PC-9 (cell line): ENCODE measurements at regions of chr1 and their contacts with region 1.

Region 1: DNA sequence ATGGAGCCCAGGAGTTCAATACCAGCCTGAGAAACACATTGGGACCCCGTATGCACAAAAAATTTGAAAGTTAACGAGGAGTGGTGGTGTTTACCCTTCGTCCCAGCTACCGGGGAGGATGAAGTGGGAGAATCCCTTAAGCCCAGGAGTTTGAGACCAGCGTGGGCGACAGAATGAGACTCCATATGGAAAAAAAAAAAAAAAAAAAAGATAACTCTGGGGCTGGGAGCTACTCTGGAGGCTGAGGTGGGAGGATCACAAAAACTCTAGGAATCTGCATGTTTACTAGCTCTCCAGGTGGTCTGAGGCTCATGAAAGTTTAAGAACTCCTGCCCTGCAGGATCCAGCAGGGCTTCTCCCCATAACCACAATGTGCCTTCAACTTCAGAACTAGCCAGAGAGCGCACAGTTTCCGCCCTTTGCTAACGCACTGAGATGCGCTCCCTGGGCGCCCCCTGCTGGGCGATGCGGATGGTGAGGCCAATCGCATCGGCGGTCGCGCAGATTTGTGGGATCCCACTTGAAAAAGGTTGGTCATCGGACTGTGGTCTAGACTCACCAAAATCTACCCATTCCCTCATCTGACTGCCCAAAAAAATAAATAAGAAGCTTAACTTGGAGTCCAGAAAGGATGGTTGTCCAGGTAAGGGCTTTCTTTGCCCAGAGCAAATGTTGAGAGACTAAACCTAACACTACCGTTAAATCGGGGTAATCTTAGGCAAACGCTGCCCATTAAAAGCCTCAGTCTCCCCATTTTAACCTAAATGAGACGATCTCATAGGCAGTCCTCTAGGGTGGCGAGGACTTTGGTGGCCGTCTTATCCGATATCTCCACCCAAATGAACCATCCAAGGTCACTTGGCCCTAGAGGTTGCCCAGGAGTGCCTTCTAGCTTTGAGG is 8.8 kb downstream of the ZNF683 start:
- DNase-seq: peak in 1 of 2 experiments; percentile 76
- H3K4me3 ChIP-seq: no peak overlapping the region
- H3K27ac ChIP-seq: no peak overlapping the region
- H3K4me1 ChIP-seq: peaks cover 7% of the 10 kb centered on the region
- H3K27me3 ChIP-seq: no peaks in the 10 kb centered on the region
- CTCF ChIP-seq: peak; percentile 80

Region 2: GRCh38 chr1:25520446-25521061 is 843.2 kb before region 1 on chr1:
- CTCF ChIA-PET with region 1: interaction called, 10 read pairs
- POLR2A ChIA-PET with region 1: no interaction called
- intact Hi-C with region 1: no loop called
- DNase-seq: peak in 1 of 2 experiments; percentile 34
- H3K4me3 ChIP-seq: no peak overlapping the region
- H3K27ac ChIP-seq: no peak overlapping the region
- H3K4me1 ChIP-seq: no peaks in the 10 kb centered on the region
- H3K27me3 ChIP-seq: no peaks in the 10 kb centered on the region
- CTCF ChIP-seq: peak; percentile 79

Region 3: DNA sequence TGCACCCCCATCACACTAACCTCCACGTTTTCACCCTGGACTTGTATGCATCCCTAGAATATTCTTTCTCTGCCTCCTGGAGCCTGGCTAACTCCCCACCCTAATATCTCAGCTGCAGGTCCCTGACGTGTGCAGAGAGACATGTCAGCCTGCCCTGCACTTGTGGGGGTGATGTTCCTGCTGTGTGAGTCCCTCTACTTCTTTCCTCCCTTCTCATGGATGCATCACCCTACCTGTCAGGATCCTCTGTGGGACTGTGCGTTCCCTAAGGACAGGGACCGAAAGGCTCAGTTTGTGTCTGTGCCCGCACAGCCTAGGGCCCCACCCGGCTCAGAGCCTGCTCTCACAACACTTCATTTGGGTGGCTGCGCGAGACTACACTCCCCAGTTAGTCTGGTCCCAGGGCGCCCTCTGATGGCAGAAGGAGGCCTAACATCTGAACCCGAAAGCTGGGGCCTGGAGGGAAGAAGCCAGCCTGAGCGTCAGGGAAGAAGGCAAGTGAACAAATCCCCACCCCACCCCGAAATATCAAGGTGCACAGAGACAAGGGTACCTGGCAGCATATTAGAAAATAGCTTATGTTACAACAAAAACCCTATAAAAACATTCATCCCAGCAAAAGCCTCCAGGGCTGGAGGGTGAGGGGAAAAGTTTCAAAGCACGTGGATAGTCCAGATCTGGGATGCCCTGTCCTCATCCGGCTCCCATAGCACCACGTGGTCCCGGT is 42.3 kb before region 1 on chr1:
- CTCF ChIA-PET with region 1: no interaction called
- POLR2A ChIA-PET with region 1: no interaction called
- intact Hi-C with region 1: loop called (anchors 1 kb)
- DNase-seq: peak; percentile 42 to 86
- H3K4me3 ChIP-seq: no peak overlapping the region
- H3K27ac ChIP-seq: no peak overlapping the region
- H3K4me1 ChIP-seq: no peaks in the 10 kb centered on the region
- H3K27me3 ChIP-seq: no peaks in the 10 kb centered on the region
- CTCF ChIP-seq: peak; percentile 80

Region 4: DNA sequence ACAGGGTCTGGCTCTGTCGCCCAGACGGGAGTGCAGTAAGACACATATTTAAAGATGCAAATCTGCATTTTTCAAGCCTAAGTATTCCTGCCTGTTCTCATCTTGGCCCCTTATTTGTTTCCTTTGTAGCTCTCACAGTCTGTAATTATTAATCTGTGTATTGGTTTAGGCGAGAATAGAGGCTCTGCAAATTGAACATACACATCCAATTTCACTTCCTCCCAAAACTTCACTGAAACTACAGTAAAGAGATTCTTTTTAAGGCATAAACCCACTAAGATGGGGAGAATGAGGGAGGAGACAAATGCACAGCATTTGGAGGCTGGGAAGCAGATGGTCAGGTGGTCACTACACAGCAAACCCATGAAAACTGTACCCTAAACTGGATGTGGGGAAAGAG is 129.5 kb after region 1 on chr1:
- CTCF ChIA-PET with region 1: no interaction called
- POLR2A ChIA-PET with region 1: no interaction called
- intact Hi-C with region 1: no loop called
- DNase-seq: no peak
- H3K4me3 ChIP-seq: no peak overlapping the region
- H3K27ac ChIP-seq: no peak overlapping the region
- H3K4me1 ChIP-seq: no peaks in the 10 kb centered on the region
- H3K27me3 ChIP-seq: no peaks in the 10 kb centered on the region
- CTCF ChIP-seq: no peak